ENCODE measurements at regions of chr2 and their contacts with region 1.

Region 1: DNA sequence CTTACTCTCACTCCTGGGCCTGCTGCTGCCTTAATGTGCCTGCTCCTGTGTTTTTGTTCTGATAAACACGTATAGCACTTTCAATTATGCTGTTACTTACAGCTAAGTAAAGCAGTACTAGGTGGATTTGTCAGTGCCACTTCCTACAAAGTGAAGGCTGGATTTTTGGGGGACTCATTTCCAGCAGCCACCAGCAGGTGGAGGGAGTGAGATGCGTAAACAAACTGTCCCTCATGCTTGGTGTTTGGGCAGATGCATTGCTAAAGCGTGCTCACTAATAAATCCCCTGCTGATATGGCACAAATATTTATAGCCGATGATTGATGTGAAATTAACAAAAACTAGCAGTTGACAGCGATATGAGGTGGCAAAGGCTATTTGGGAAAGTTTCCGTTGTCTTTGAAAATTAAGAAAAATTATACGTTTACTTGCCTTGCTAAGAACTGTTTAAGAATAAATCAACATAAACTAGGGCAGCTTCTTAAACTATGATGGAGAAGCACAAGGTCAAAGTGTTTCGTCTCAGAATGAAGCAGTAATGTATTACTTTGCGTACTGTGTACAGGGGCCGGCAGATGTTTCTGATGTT is 101.7 kb downstream of the AGAP1 start:
- DNase-seq: peak; percentile 73 to 94 (median 80)
- H3K4me3 ChIP-seq: peak overlapping the region in 1 of 59 donors; percentile 4
- H3K27ac ChIP-seq: peak overlapping the region in 46 of 59 donors; percentile 5 to 82 (median 62)
- H3K27me3 ChIP-seq: no peaks in the 10 kb centered on the region
- CTCF ChIP-seq: peak; percentile 80 to 99 (median 94)

Region 2: DNA sequence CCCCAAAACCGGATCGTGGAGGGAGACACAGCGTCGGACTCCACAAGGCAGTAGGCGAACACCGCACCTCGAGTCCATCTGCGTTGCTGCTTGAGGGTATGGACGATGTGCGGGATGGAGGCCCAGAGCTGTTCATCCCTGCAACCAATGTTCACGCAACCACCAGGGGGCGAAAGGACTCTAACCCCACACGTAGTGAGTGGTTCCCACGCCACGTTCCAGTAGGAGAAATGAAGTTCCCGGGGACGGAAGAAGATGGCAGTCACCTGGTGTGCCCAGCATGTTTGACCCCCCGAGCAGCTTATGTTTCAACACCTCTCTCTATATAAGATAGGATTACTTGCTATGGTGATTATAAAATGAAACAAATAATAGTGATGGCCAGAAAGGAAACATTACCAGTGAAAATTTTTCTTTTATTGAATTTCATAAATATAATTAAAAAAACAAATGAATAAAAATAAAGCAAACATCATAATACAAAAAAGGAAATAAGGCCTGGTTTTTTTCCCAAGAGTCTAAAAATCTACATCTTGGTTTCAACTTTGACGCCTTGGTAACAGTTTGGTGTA is 459.4 kb before region 1 on chr2:
- intact Hi-C with region 1: loop called (anchors 5 kb)
- DNase-seq: peak; percentile 56 to 88 (median 78)
- H3K4me3 ChIP-seq: peak overlapping the region in 1 of 59 donors; percentile 28
- H3K27ac ChIP-seq: no peak overlapping the region
- H3K27me3 ChIP-seq: peaks cover 0 to 3% (median 0%) of the 10 kb centered on the region in 45 donors
- CTCF ChIP-seq: peak; percentile 51 to 88 (median 75)

Region 3: DNA sequence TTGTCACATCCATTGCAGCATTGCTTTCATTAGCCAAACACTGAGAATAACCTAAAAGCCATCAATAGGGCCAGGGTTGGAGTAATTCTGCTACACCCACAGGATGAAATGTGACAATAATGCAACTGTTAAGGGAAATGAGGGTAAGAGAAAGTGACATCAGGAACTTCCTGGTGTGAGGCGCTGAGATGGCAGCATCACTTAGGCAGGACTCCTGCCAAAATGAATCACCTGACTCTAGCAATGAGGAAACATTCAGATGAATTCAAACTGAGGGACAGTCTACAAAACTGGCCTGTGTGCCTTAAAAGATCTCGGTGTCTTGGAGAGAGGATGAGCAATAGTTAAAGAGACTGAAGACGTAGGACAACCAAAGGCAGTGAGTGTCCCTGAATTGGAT is 217.3 kb before region 1 on chr2:
- intact Hi-C with region 1: no loop called
- DNase-seq: peak in 1 of 10 donors; percentile 62
- H3K4me3 ChIP-seq: no peak overlapping the region
- H3K27ac ChIP-seq: no peak overlapping the region
- H3K27me3 ChIP-seq: peaks cover 0 to 3% (median 0%) of the 10 kb centered on the region in 45 donors
- CTCF ChIP-seq: no peak

Region 4: GRCh38 chr2:235433860-235434259 is 161.7 kb before region 1 on chr2:
- intact Hi-C with region 1: loop called (anchors 5 kb)
- DNase-seq: peak in 7 of 10 donors; percentile 44 to 83 (median 61)
- H3K4me3 ChIP-seq: peak overlapping the region in 26 of 59 donors; percentile 0 to 55 (median 28)
- H3K27ac ChIP-seq: peak overlapping the region in 44 of 59 donors; percentile 0 to 77 (median 36)
- H3K27me3 ChIP-seq: no peaks in the 10 kb centered on the region
- CTCF ChIP-seq: peak in 52 of 56 donors; percentile 9 to 72 (median 41)

Region 5: GRCh38 chr2:235551965-235552364 is 43.6 kb before region 1 on chr2:
- intact Hi-C with region 1: loop called in 1 of 2 experiments (anchors 5 kb)
- DNase-seq: peak; percentile 50 to 79 (median 70)
- H3K4me3 ChIP-seq: peak overlapping the region in 9 of 59 donors; percentile 1 to 38 (median 18)
- H3K27ac ChIP-seq: peak overlapping the region in 16 of 59 donors; percentile 5 to 73 (median 44)
- H3K27me3 ChIP-seq: no peaks in the 10 kb centered on the region
- CTCF ChIP-seq: peak; percentile 13 to 87 (median 65)

Region 6: DNA sequence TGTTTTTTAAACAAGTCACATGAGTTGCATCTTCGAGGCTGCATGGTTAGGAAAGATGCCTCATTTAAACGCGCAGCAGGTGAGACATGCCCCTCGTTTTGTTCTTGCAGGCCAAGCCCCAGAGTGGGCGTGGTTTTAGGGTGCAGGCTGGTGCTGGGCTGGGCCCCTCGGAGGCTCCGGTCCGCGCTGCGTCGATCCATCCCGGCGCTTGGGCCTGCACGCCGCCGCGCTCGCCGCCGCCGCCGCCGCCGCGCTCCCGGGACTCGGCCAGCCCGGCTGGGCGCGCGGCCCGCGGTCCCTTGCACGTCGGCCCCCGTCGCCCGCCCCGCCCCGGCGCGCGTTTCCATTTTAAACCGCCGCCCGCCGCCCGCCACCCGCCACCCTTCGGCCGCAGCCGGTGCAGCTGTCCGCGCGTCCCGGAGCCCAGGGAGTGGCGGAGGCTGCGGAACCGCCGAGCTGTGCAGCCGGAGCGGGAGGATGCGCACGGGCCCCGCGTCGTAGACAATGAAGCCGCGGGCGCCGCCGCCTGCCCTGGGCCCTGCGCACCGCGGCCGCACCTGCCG is 73.8 kb after region 1 on chr2:
- intact Hi-C with region 1: loop called (anchors 1 to 2 kb)
- DNase-seq: peak; percentile 63 to 87 (median 74)
- H3K4me3 ChIP-seq: peak overlapping the region in 56 of 59 donors; percentile 27 to 84 (median 66)
- H3K27ac ChIP-seq: peak overlapping the region in 41 of 59 donors; percentile 37 to 87 (median 65)
- H3K27me3 ChIP-seq: no peaks in the 10 kb centered on the region
- CTCF ChIP-seq: peak in 17 of 56 donors; percentile 6 to 37 (median 23)

Region 7: GRCh38 chr2:235951982-235952381 is 356.5 kb after region 1 on chr2:
- intact Hi-C with region 1: no loop called
- DNase-seq: no peak
- H3K4me3 ChIP-seq: no peak overlapping the region
- H3K27ac ChIP-seq: no peak overlapping the region
- H3K27me3 ChIP-seq: no peaks in the 10 kb centered on the region
- CTCF ChIP-seq: no peak

Region 8: DNA sequence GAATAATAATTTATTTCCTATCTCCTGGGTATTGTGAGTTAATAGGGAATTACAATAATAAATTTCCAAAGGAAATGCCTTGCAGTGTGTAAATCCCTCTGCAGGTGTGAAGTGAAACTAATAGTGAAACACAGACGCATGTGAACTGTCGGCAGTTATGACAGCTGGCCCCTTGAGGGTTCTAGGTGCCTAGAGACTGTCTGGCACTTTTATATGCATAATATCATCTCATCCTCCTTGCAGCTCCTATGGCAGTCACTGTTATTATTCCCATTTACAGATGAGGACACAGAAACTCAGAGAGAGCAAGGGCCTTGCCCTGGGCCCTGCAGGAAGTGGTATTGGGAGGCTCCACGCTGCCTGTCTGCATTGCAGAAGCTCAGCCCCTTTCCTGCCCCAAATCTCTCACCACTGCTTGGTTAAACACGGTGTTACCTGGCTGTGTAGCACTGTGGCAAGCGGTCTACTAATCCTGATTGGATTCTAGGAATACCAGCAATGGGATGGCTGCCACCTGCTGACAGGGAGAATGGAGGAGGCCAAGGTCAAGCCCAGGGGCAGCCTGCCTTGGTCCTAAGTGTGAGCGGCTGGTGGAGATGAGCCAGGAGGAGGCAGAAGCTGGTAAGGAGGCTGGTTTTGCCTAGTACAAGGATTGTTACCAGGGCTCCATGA is 941.3 kb after region 1 on chr2:
- intact Hi-C with region 1: no loop called
- DNase-seq: no peak
- H3K4me3 ChIP-seq: no peak overlapping the region
- H3K27ac ChIP-seq: no peak overlapping the region
- H3K27me3 ChIP-seq: peaks cover 0 to 3% (median 0%) of the 10 kb centered on the region in 45 donors
- CTCF ChIP-seq: no peak